Psoas muscle (tissue), 8 donors: ENCODE measurements at regions of chr13 and their contacts with region 1.

Region 1: GRCh38 chr13:24995226-24995804 is 100.6 kb upstream of the PABPC3 start:
- DNase-seq: no peak
- ATAC-seq: peak in 3 of 4 donors; percentile 61 to 83 (median 77)
- H3K4me3 ChIP-seq: no peak overlapping the region
- H3K27ac ChIP-seq: no peak overlapping the region
- H3K4me1 ChIP-seq: no peaks in the 10 kb centered on the region
- H3K27me3 ChIP-seq: peaks cover 0 to 3% (median 0%) of the 10 kb centered on the region in 3 donors
- CTCF ChIP-seq: peak; percentile 69

Region 2: GRCh38 chr13:25114220-25114619 is 118.9 kb after region 1 on chr13:
- intact Hi-C with region 1: loop called (anchors 5 to 10 kb)
- DNase-seq: peak; percentile 43 to 62
- ATAC-seq: peak; percentile 53 to 79 (median 73)
- H3K4me3 ChIP-seq: no peak overlapping the region
- H3K27ac ChIP-seq: no peak overlapping the region
- H3K4me1 ChIP-seq: no peaks in the 10 kb centered on the region
- H3K27me3 ChIP-seq: peaks cover 0 to 3% (median 0%) of the 10 kb centered on the region in 3 donors
- CTCF ChIP-seq: peak; percentile 58

Region 3: GRCh38 chr13:25375727-25376358 is 380.5 kb after region 1 on chr13:
- intact Hi-C with region 1: loop called in 1 of 2 experiments (anchors 10 kb)
- DNase-seq: no peak
- ATAC-seq: no peak
- H3K4me3 ChIP-seq: no peak overlapping the region
- H3K27ac ChIP-seq: no peak overlapping the region
- H3K4me1 ChIP-seq: no peaks in the 10 kb centered on the region
- H3K27me3 ChIP-seq: peaks cover 0 to 46% (median 22%) of the 10 kb centered on the region in 3 donors
- CTCF ChIP-seq: peak; percentile 47